ENCODE measurements at regions of chr4 and their contacts with region 1.

Region 1: GRCh38 chr4:55008166-55009070 is 117.0 kb downstream of the KDR start:
- DNase-seq: no peak
- H3K4me3 ChIP-seq: no peak overlapping the region
- H3K27ac ChIP-seq: no peak overlapping the region
- H3K4me1 ChIP-seq: peaks cover 0 to 6% of the 10 kb centered on the region in 2 donors
- H3K27me3 ChIP-seq: no peaks in the 10 kb centered on the region
- CTCF ChIP-seq: peak in 1 of 3 experiments; percentile 9

Region 2: GRCh38 chr4:55125087-55125721 is 116.8 kb after region 1 on chr4 and contains the start of gene KDR:
- intact Hi-C with region 1: loop called (anchors 5 kb)
- DNase-seq: no peak
- H3K4me3 ChIP-seq: peak within 1 kb of the TSS; percentile 54 to 65
- H3K27ac ChIP-seq: no peak within 1 kb of the TSS
- H3K4me1 ChIP-seq: no peaks in the 10 kb centered on the region
- H3K27me3 ChIP-seq: no peaks in the 10 kb centered on the region
- CTCF ChIP-seq: no peak
- total RNA-seq, gene KDR: 22.9 TPM